Caco-2 (cell line): ENCODE measurements at regions of chr6 and their contacts with region 1.

Region 1: DNA sequence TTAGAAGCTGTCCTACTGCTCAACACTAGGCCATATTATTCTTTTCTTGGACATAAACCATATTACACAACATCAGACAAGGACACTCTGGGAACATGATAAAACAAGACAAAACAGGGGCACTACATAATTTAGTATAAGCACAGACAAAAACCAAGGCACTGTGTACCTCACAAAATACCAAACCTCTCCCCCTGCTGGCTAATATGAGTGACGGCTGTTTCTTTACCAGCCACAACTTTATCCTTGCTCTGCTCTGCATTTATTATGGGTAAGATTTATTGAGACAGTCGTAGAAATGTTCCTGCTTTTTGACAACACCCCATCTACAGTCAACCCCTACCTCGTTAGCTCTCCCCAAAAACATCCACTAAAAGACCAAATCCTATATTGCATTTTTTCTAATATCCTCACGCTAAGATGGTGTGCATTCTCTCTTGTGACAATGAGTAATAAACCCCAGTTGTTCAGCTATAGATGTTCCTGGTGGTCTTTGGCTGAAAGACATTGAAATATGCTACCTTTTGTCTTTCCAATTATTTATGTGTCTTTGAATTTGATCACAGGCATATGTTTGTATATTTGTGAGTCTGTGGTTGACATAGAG is 23.8 kb upstream of the POLR1H start:
- DNase-seq: peak in 1 of 2 experiments; percentile 11
- H3K4me3 ChIP-seq: no peak overlapping the region
- H3K4me3 Mint-ChIP-seq: no peak overlapping the region
- H3K27ac Mint-ChIP-seq: no peak overlapping the region
- H3K4me1 ChIP-seq: no peaks in the 10 kb centered on the region
- H3K4me1 Mint-ChIP-seq: no peaks in the 10 kb centered on the region
- H3K27me3 ChIP-seq: no peaks in the 10 kb centered on the region
- H3K27me3 Mint-ChIP-seq: no peaks in the 10 kb centered on the region
- CTCF ChIP-seq: peak; percentile 57 to 63

Region 2: DNA sequence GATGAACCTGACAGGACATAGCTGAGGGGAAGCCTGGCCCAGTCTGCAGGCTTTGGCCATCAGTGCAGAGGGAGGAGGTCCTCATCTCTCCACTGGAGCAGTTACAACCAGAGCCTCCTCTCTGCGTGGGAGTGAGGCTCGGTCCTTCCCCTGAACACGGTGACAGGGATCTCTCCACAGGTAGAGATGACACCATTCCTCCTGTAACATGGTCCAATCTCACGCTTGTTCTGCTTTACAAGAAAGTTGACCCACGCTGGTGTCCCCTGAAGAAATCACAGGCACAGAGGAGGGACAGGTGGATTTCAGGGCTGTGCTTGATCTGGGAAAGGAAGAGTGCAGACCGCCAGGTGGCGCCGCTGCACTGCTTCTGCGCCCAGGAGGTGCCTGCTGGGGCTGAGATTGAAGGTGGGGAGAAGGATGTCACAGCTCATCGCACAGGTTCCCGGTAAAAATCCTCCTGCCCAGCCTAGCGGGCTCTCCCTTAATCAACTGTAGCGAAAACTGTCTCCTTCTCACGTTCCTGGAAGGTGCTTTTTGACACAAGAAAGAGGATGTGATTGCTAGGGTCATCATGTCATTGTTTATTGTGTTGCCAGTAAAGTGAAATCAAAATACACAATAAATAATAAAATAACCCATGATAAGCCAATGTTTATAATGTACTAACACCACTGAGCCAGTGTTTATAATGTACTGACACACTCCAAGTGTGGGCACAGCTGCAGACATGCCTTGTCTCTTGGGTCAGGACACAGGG is 189.2 kb before region 1 on chr6:
- CTCF ChIA-PET with region 1: interaction called, 3 read pairs
- POLR2A ChIA-PET with region 1: no interaction called
- intact Hi-C with region 1: loop called (anchors 1 kb)
- DNase-seq: peak; percentile 75 to 83
- H3K4me3 ChIP-seq: no peak overlapping the region
- H3K4me3 Mint-ChIP-seq: no peak overlapping the region
- H3K27ac Mint-ChIP-seq: no peak overlapping the region
- H3K4me1 ChIP-seq: no peaks in the 10 kb centered on the region
- H3K4me1 Mint-ChIP-seq: no peaks in the 10 kb centered on the region
- H3K27me3 ChIP-seq: no peaks in the 10 kb centered on the region
- H3K27me3 Mint-ChIP-seq: peaks cover 15% of the 10 kb centered on the region
- CTCF ChIP-seq: peak; percentile 89 to 93

Region 3: DNA sequence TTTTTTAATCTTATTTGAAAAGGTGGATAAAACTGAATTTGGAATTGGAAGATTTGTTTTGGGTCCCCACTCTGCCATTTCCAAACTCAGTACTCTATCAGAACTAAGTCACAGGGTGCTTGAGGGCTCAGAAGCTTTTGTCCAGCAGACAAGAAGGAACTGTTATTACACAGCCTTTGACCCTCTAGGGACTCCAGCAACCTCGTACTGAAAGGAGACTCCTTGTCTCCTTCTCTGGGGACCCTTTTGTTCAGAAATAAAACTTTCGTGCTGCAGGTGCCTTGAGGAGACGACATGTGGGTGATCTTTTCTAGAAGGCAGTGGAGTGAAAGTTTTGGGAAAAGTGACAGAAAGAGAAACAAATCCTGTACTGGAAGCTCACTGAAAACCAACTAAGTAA is 16.4 kb after region 1 on chr6:
- CTCF ChIA-PET with region 1: no interaction called
- POLR2A ChIA-PET with region 1: no interaction called
- intact Hi-C with region 1: no loop called
- DNase-seq: no peak
- H3K4me3 ChIP-seq: no peak overlapping the region
- H3K4me3 Mint-ChIP-seq: no peak overlapping the region
- H3K27ac Mint-ChIP-seq: no peak overlapping the region
- H3K4me1 ChIP-seq: no peaks in the 10 kb centered on the region
- H3K4me1 Mint-ChIP-seq: no peaks in the 10 kb centered on the region
- H3K27me3 ChIP-seq: no peaks in the 10 kb centered on the region
- H3K27me3 Mint-ChIP-seq: no peaks in the 10 kb centered on the region
- CTCF ChIP-seq: no peak